Naive thymus-derived CD4-positive, alpha-beta T cell (primary cell): ENCODE measurements at regions of chr17 and their contacts with region 1.

Region 1: GRCh38 chr17:82120148-82120547 is 22.1 kb upstream of the FASN start:
- DNase-seq: peak in 7 of 9 donors; percentile 55 to 85 (median 76)
- ATAC-seq: peak; percentile 91
- H3K4me3 ChIP-seq: no peak overlapping the region
- H3K4me3 Mint-ChIP-seq: peak overlapping the region; percentile 8 to 79 (median 67)
- H3K27ac ChIP-seq: peak overlapping the region; percentile 66
- H3K27ac Mint-ChIP-seq: peak overlapping the region; percentile 60 to 100 (median 95)
- H3K4me1 ChIP-seq: peaks cover 1 to 57% of the 10 kb centered on the region in 2 donors
- H3K4me1 Mint-ChIP-seq: peaks cover 25 to 69% (median 64%) of the 10 kb centered on the region in 7 donors
- H3K27me3 ChIP-seq: no peaks in the 10 kb centered on the region
- H3K27me3 Mint-ChIP-seq: no peaks in the 10 kb centered on the region

Region 2: DNA sequence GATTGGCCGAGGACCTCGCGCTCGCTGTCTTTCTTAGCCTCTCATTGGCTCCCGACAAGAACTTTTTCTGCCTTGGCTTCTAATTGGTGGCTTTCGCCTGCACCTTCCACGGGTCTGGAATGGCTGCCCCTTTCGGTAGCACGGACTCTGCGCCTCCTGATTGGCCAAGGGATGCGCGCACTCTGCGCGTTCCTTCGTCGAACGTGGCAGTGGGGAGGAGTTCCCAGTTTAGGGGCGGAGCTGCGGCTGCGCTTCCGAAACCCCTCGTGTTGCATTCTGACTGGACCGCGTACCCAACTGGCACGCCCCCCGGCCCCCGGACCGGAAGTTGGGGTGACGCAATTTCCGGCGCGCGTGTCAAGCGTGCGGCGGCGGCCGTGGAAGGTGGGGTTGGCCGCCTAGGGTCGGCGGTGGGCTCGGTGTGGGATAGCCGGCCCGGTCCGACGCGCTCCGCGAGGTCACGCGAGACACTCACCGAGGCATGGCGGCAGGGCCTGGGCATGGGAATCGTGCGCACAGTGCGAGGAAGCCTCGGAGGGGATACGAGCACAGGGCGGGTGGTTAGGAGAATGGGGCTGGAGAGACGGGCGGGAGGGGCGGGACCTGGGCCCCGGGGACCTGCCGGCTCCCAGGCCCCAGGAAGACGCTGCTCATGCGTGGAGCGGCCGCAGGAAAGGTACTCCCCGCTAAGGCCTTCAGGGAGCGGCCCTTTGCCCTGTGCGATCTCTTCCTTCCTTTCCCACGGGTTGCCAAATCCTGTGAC is 259.2 kb before region 1 on chr17:
- CTCF ChIA-PET with region 1: no interaction called
- POLR2A ChIA-PET with region 1: no interaction called
- intact Hi-C with region 1: no loop called
- DNase-seq: peak; percentile 98 to 100 (median 100)
- ATAC-seq: peak; percentile 91
- H3K4me3 ChIP-seq: peak overlapping the region; percentile 83
- H3K4me3 Mint-ChIP-seq: peak overlapping the region; percentile 81 to 99 (median 90)
- H3K27ac ChIP-seq: peak overlapping the region; percentile 95
- H3K27ac Mint-ChIP-seq: peak overlapping the region; percentile 89 to 100 (median 98)
- H3K4me1 ChIP-seq: peaks cover 20 to 27% of the 10 kb centered on the region in 2 donors
- H3K4me1 Mint-ChIP-seq: peaks cover 19 to 53% (median 43%) of the 10 kb centered on the region in 7 donors
- H3K27me3 ChIP-seq: no peaks in the 10 kb centered on the region
- H3K27me3 Mint-ChIP-seq: peaks cover 0 to 5% (median 0%) of the 10 kb centered on the region in 5 donors

Region 3: GRCh38 chr17:82105882-82106687 is 14.1 kb before region 1 on chr17:
- CTCF ChIA-PET with region 1: interaction called, 14 read pairs
- POLR2A ChIA-PET with region 1: interaction called, 45 read pairs
- intact Hi-C with region 1: loop called in 1 of 2 experiments (anchors 1 kb)
- DNase-seq: peak; percentile 14 to 69 (median 56)
- ATAC-seq: peak; percentile 89
- H3K4me3 ChIP-seq: peak overlapping the region; percentile 73
- H3K4me3 Mint-ChIP-seq: peak overlapping the region; percentile 87 to 94 (median 90)
- H3K27ac ChIP-seq: peak overlapping the region; percentile 89
- H3K27ac Mint-ChIP-seq: peak overlapping the region; percentile 95 to 99 (median 97)
- H3K4me1 ChIP-seq: peaks cover 17 to 25% of the 10 kb centered on the region in 2 donors
- H3K4me1 Mint-ChIP-seq: peaks cover 18 to 44% (median 32%) of the 10 kb centered on the region in 7 donors
- H3K27me3 ChIP-seq: no peaks in the 10 kb centered on the region
- H3K27me3 Mint-ChIP-seq: no peaks in the 10 kb centered on the region

Region 4: GRCh38 chr17:82153745-82154375 is 33.7 kb after region 1 on chr17:
- CTCF ChIA-PET with region 1: interaction called, 8 read pairs
- POLR2A ChIA-PET with region 1: interaction called, 7 read pairs
- intact Hi-C with region 1: loop called (anchors 1 kb)
- DNase-seq: peak; percentile 76 to 91 (median 82)
- ATAC-seq: peak; percentile 99
- H3K4me3 ChIP-seq: no peak overlapping the region
- H3K4me3 Mint-ChIP-seq: no peak overlapping the region
- H3K27ac ChIP-seq: no peak overlapping the region
- H3K27ac Mint-ChIP-seq: peak overlapping the region in 7 of 9 donors; percentile 23 to 97 (median 87)
- H3K4me1 ChIP-seq: peaks cover 0 to 10% of the 10 kb centered on the region in 2 donors
- H3K4me1 Mint-ChIP-seq: peaks cover 5 to 20% (median 10%) of the 10 kb centered on the region in 7 donors
- H3K27me3 ChIP-seq: no peaks in the 10 kb centered on the region
- H3K27me3 Mint-ChIP-seq: no peaks in the 10 kb centered on the region

Region 5: GRCh38 chr17:82212331-82213250 is 92.4 kb after region 1 on chr17 and contains the start of gene CCDC57:
- CTCF ChIA-PET with region 1: no interaction called
- POLR2A ChIA-PET with region 1: no interaction called
- intact Hi-C with region 1: loop called in 1 of 2 experiments (anchors 10 kb)
- DNase-seq: peak in 2 of 9 donors; percentile 52 to 83
- ATAC-seq: peak; percentile 61
- H3K4me3 ChIP-seq: peak within 1 kb of the TSS; percentile 68
- H3K4me3 Mint-ChIP-seq: peak within 1 kb of the TSS; percentile 70 to 86 (median 82)
- H3K27ac ChIP-seq: peak within 1 kb of the TSS; percentile 82
- H3K27ac Mint-ChIP-seq: peak within 1 kb of the TSS; percentile 41 to 88 (median 79)
- H3K4me1 ChIP-seq: peaks cover 23 to 31% of the 10 kb centered on the region in 2 donors
- H3K4me1 Mint-ChIP-seq: peaks cover 5 to 45% (median 35%) of the 10 kb centered on the region in 7 donors
- H3K27me3 ChIP-seq: no peaks in the 10 kb centered on the region
- H3K27me3 Mint-ChIP-seq: peaks cover 0 to 2% (median 0%) of the 10 kb centered on the region in 5 donors
- total RNA-seq, gene CCDC57: 75.7 to 127 (median 95.0) TPM